Aorta (tissue), 5 donors: ENCODE measurements at regions of chr10 and their contacts with region 1.

Region 1: GRCh38 chr10:113060201-113061053 is 110.4 kb downstream of the TCF7L2 start:
- DNase-seq: peak; percentile 80 to 84
- ATAC-seq: peak; percentile 81
- H3K4me3 ChIP-seq: no peak overlapping the region
- H3K27ac ChIP-seq: peak overlapping the region; percentile 92 to 96
- H3K4me1 ChIP-seq: peaks cover 15 to 29% of the 10 kb centered on the region in 2 donors
- H3K27me3 ChIP-seq: no peaks in the 10 kb centered on the region

Region 2: GRCh38 chr10:113020838-113021237 is 39.6 kb before region 1 on chr10:
- intact Hi-C with region 1: loop called in 1 of 2 experiments (anchors 5 kb)
- DNase-seq: no peak
- ATAC-seq: peak; percentile 26
- H3K4me3 ChIP-seq: no peak overlapping the region
- H3K27ac ChIP-seq: peak overlapping the region in 1 of 2 donors; percentile 47
- H3K4me1 ChIP-seq: peaks cover 12 to 15% of the 10 kb centered on the region in 2 donors
- H3K27me3 ChIP-seq: no peaks in the 10 kb centered on the region

Region 3: GRCh38 chr10:113261161-113261560 is 200.7 kb after region 1 on chr10:
- intact Hi-C with region 1: no loop called
- DNase-seq: no peak
- ATAC-seq: no peak
- H3K4me3 ChIP-seq: no peak overlapping the region
- H3K27ac ChIP-seq: no peak overlapping the region
- H3K4me1 ChIP-seq: no peaks in the 10 kb centered on the region
- H3K27me3 ChIP-seq: no peaks in the 10 kb centered on the region